ENCODE measurements at regions of chr5 and their contacts with region 1.

Region 1: GRCh38 chr5:177454397-177455035 is 7.9 kb downstream of the PRR7 start:
- DNase-seq: peak; percentile 88 to 93
- H3K4me3 ChIP-seq: peak overlapping the region; percentile 45 to 48
- H3K27ac ChIP-seq: peak overlapping the region; percentile 63 to 68
- H3K4me1 ChIP-seq: peaks cover 0 to 23% of the 10 kb centered on the region in 2 donors
- H3K27me3 ChIP-seq: no peaks in the 10 kb centered on the region
- CTCF ChIP-seq: peak; percentile 87 to 98 (median 94)
- POLR2A ChIP-seq: peak in 1 of 2 donors; percentile 33

Region 2: DNA sequence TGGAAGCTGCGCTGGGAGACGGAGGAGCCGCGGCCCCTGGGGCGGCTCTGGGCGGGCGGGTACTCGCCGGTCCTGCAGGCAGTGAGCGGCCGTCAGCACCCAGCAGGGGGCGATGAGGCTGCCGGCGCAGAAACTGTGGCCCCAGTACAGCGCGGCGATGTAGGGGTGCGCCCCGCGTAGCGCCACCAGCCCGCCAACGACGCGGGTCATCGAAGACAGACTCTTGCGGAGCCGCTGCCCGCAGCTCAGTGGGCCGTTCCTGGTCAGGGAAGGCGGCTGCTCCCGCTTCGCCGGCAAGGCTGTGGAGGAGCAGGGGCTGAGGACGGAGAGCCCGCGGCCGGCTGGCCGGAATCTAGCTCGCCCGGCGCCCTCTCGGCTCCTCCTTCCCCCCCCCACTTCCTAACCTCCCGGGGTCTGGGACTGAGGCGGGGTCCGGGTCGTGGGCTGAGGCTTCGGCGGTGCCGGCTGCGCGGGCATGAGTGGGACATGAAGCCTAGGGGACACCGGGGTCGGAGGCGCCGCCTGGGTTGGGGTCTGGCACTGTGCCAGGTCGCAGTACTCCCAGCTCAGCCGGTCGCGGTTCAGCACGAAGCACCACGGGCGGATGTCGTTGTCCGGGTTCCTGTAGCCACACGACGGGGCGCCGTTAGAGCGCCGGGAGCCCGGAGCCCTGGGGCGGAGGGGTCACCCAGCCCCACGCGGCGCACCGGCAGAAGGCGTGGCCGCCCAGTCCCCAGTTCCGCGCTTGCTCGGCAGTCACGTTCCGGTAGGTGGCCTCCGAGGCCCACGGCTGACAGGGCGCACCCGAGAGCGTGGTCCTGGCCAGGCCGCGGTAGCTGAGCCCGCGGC is 50.5 kb before region 1 on chr5:
- intact Hi-C with region 1: loop called (anchors 5 kb)
- DNase-seq: peak; percentile 80 to 84
- H3K4me3 ChIP-seq: peak overlapping the region; percentile 33 to 38
- H3K27ac ChIP-seq: no peak overlapping the region
- H3K4me1 ChIP-seq: peaks cover 0 to 25% of the 10 kb centered on the region in 2 donors
- H3K27me3 ChIP-seq: peaks cover 36 to 39% of the 10 kb centered on the region in 2 donors
- CTCF ChIP-seq: peak; percentile 64 to 84 (median 79)
- POLR2A ChIP-seq: peak in 1 of 2 donors; percentile 15